Right cardiac atrium (tissue), 5 donors: ENCODE measurements at regions of chr1 and their contacts with region 1.

Region 1: GRCh38 chr1:53945433-53946251 is at the start of gene IFT25:
- DNase-seq: peak; percentile 96 to 99 (median 98)
- ATAC-seq: peak; percentile 96 to 97
- H3K4me3 ChIP-seq: peak within 1 kb of the TSS; percentile 67
- H3K27ac ChIP-seq: peak within 1 kb of the TSS; percentile 82
- H3K4me1 ChIP-seq: peaks cover 5% of the 10 kb centered on the region
- H3K27me3 ChIP-seq: no peaks in the 10 kb centered on the region
- total RNA-seq, gene IFT25: 14.2 to 16.8 (median 15.2) TPM

Region 2: DNA sequence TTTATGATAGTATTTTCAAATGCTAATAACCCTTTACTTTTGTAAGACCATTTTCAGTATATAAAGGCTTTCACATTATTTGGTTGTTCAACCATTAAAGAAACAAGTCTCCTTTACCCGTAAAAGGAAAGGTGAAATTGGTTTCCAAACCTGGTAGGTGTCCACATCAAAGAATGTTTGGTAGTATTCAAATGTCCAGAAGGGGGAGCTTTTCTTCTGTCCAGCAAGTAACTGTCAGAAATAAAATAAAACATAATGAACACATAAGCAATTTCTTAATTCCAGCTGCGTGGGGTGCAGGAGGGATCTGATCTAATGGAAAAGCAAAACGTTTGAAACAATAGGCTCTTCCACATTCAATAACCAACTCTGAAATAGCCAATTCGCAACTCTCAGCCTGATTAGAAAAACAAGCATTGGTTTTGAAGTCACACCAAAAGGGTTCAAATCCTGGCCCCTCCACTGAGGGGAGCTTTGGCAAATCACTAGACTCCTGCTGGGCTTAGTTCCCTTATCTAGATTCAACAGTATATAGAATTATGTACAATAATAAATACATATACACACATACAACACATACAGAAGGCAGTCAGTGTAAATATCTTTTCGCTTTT is 67.0 kb before region 1 on chr1:
- intact Hi-C with region 1: loop called in 2 of 4 experiments (anchors 2 to 5 kb)
- DNase-seq: no peak
- ATAC-seq: no peak
- H3K4me3 ChIP-seq: no peak overlapping the region
- H3K27ac ChIP-seq: no peak overlapping the region
- H3K4me1 ChIP-seq: no peaks in the 10 kb centered on the region
- H3K27me3 ChIP-seq: no peaks in the 10 kb centered on the region

Region 3: GRCh38 chr1:53889304-53890298 is 56.0 kb before region 1 on chr1 and contains the start of gene YIPF1:
- intact Hi-C with region 1: loop called in 2 of 4 experiments (anchors 5 to 10 kb)
- DNase-seq: peak; percentile 93 to 97 (median 96)
- ATAC-seq: peak; percentile 99
- H3K4me3 ChIP-seq: peak within 1 kb of the TSS; percentile 97
- H3K27ac ChIP-seq: peak within 1 kb of the TSS; percentile 69
- H3K4me1 ChIP-seq: no peaks in the 10 kb centered on the region
- H3K27me3 ChIP-seq: no peaks in the 10 kb centered on the region
- total RNA-seq, gene YIPF1: 13.3 to 15.7 (median 15.6) TPM